Activated T-helper 1 cell treated with anti-CD3 and anti-CD28 coated beads, Interleukin-12 subunit alpha, Interleukin-12 subunit beta, Interleukin-2, Interleukin-4 antibody, amounts not matched to agents 30 ng/mL and 10 ng/mL and 1 ng/mL, durations not matched to agents 14 hours and 24 hours and 36 hours (primary cell): ENCODE measurements at regions of chr7 and their contacts with region 1.

Region 1: DNA sequence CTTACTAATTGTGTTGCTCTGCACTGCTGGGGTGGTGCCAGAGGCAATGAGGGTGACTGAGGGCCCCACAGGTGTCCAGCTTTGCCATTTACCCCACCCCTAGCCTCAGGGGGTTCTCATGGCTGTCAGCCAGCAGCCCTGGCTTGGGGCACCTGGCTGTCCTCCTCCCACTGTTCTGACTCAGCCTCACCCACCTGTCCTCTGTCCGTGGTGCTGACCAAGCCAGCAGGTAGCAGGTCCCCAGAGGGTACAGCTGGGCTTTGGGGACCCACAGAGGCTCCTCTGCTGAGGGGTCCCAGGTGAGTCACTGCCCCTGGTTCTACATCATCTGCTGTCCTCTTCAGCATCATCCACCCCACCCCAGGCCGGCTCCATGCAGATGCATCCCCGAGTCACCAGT is 32.2 kb upstream of the ZNF716 start:
- DNase-seq: no peak
- H3K4me3 Mint-ChIP-seq: no peak overlapping the region
- H3K27ac Mint-ChIP-seq: no peak overlapping the region
- H3K4me1 Mint-ChIP-seq: no peaks in the 10 kb centered on the region
- H3K27me3 Mint-ChIP-seq: no peaks in the 10 kb centered on the region

Region 2: GRCh38 chr7:57404343-57404953 is 13.3 kb before region 1 on chr7:
- intact Hi-C with region 1: loop called (anchors 1 kb)
- DNase-seq: no peak
- H3K4me3 Mint-ChIP-seq: no peak overlapping the region
- H3K27ac Mint-ChIP-seq: no peak overlapping the region
- H3K4me1 Mint-ChIP-seq: no peaks in the 10 kb centered on the region
- H3K27me3 Mint-ChIP-seq: no peaks in the 10 kb centered on the region

Region 3: DNA sequence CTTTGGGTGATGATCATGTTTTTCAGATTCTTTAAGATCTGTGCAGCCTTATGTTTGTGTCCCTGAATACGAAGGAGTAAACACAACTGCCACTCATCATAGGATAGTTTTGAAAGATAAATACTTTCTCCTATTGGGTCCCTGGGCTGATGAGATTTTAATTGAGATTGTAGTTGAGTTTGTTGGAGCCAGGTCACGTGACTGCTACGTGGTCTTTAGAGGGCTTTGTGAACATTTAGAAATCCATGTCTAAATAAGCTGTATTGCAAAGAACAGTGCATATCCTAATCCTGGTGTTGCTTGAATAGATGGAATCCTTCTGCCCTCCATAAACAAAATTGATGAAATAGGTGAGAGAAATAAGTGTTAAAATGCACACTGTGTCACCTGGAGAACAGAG is 14.9 kb after region 1 on chr7:
- intact Hi-C with region 1: no loop called
- DNase-seq: no peak
- H3K4me3 Mint-ChIP-seq: no peak overlapping the region
- H3K27ac Mint-ChIP-seq: no peak overlapping the region
- H3K4me1 Mint-ChIP-seq: no peaks in the 10 kb centered on the region
- H3K27me3 Mint-ChIP-seq: no peaks in the 10 kb centered on the region